Activated CD8-positive, alpha-beta T cell treated with anti-CD3 and anti-CD28 coated beads, Interleukin-2, amount 10 ng/mL, durations not matched to agents 7 days and 5 days (primary cell): ENCODE measurements at regions of chr5 and their contacts with region 1.

Region 1: DNA sequence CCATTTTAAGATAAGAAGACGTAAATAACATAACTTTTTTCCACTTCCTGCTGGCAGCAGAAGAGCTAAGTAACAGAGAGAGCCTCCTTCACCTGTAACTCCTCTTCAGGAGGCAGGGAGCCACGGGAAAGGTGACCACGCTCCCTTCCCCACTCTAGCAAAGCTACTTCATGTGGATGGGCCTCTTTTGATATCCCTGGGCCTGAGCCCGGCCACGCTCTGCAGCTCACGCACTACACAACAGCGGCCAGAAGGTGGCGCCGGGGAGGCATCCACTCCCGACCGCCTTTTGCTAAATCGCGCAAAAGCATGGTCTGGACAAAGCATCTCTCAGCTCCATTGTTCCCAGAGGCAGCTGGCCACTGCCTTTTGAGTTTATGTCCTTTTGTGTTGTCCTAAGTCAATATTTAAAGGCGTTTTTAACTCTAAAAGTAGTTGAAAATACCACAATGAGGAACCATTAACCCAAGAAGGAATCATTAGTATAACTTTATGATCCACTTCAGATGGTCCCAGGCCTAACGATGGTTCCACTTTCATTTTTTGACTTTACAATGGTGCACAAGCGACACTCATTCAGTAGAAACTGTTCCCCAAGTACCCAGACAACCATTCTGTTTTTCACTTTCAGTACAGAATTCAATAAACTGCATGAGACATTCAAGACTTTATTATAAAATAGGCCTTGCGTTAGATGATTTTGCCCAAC is 23.6 kb downstream of the CMBL start:
- DNase-seq: peak; percentile 82
- ATAC-seq: peak; percentile 98
- H3K4me3 Mint-ChIP-seq: no peak overlapping the region
- H3K27ac Mint-ChIP-seq: no peak overlapping the region
- H3K4me1 Mint-ChIP-seq: peaks cover 14% of the 10 kb centered on the region
- H3K27me3 Mint-ChIP-seq: peaks cover 4% of the 10 kb centered on the region

Region 2: GRCh38 chr5:10264604-10265003 is 19.5 kb before region 1 on chr5:
- CTCF ChIA-PET with region 1: interaction called, 10 read pairs
- POLR2A ChIA-PET with region 1: no interaction called
- DNase-seq: no peak
- ATAC-seq: no peak
- H3K4me3 Mint-ChIP-seq: no peak overlapping the region
- H3K27ac Mint-ChIP-seq: no peak overlapping the region
- H3K4me1 Mint-ChIP-seq: no peaks in the 10 kb centered on the region
- H3K27me3 Mint-ChIP-seq: no peaks in the 10 kb centered on the region

Region 3: GRCh38 chr5:10424124-10424731 is 140.1 kb after region 1 on chr5:
- CTCF ChIA-PET with region 1: interaction called, 34 read pairs
- POLR2A ChIA-PET with region 1: interaction called, 4 read pairs
- DNase-seq: peak; percentile 36
- ATAC-seq: peak; percentile 60
- H3K4me3 Mint-ChIP-seq: no peak overlapping the region
- H3K27ac Mint-ChIP-seq: no peak overlapping the region
- H3K4me1 Mint-ChIP-seq: peaks cover 22% of the 10 kb centered on the region
- H3K27me3 Mint-ChIP-seq: no peaks in the 10 kb centered on the region